Right ventricle myocardium inferior (tissue), 1 donor: ENCODE measurements at regions of chr13 and their contacts with region 1.

Region 1: GRCh38 chr13:113881614-113882266 is 17.9 kb upstream of the GAS6 start:
- DNase-seq: no peak
- ATAC-seq: peak; percentile 69

Region 2: GRCh38 chr13:113837554-113838355 is 44.0 kb before region 1 on chr13:
- intact Hi-C with region 1: loop called (anchors 2 kb)
- DNase-seq: peak; percentile 96
- ATAC-seq: peak; percentile 96

Region 3: DNA sequence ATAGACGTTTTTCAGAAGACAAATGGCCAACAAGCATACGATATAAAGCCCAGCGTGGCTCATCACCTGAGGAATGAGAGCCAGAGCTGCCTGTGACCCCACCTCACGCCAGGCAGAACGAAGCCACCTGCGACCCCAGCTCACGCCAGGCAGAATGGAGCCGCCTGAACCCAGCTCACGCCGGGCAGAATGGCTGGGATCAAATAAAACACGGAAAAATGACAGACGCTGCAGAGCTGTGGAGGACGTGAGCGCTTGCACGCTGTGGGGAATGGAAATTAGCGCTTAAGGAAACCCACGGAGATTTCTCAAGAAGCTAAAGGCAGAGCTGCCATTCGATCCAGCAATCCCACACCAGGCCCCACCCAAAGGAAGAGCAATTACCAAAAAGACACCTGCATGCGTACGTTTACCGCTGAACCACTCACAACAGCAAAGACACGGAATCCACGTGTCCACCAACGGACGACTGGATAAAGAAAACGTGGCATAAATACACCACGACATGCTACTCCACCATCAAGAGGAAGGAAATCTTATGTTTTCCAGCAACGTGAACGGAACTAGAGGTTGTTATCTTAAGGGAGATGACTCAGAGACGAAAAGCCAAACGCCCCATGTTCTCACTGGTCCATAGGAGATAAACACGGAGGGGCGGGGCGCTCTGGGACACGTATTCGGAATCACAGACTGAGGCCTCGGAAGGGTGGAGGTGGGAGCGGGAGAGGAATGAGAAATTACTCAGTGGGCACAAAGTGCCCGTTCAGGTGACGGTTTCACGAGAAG is 122.9 kb after region 1 on chr13:
- intact Hi-C with region 1: no loop called
- DNase-seq: peak; percentile 82
- ATAC-seq: peak; percentile 58